ENCODE measurements at regions of chr17 and their contacts with region 1.

Region 1: GRCh38 chr17:9115446-9116191 is 94.3 kb downstream of the NTN1 start:
- DNase-seq: peak; percentile 51
- H3K4me3 Mint-ChIP-seq: peak overlapping the region; percentile 21
- H3K27ac Mint-ChIP-seq: no peak overlapping the region
- H3K4me1 Mint-ChIP-seq: no peaks in the 10 kb centered on the region
- H3K27me3 Mint-ChIP-seq: peaks cover 26% of the 10 kb centered on the region

Region 2: DNA sequence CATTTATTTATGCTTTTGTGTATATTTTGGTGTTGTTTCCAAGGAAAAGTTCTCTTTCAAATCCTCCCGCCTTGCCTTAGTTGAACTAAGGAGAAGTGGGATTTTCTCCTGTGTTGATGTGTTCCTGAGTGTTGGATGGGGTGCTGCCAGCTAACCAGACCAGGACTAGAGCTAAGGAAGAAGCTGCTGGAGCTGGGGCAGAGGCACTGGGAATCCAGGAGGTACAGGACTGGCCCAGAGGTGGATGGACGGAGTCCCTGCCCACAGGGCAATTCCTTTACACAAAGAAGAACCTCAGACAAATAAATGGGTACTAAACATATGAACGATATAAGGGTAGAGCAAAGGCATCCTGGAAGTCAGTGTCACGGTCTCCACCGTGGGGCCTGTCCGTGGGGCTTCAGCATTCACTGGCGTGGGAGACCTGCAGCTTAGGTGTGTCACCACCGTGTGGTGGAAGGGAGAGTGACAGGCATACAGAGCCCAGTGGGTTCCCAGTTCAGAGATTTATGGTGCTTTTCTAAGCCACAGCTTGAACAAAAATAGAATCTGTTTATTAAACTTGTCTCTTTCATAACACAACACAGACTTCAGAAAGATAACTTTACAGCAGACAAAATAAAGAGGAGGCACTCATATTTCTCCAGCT is 176.4 kb after region 1 on chr17:
- CTCF ChIA-PET with region 1: interaction called, 18 read pairs
- DNase-seq: peak; percentile 53
- H3K4me3 Mint-ChIP-seq: no peak overlapping the region
- H3K27ac Mint-ChIP-seq: no peak overlapping the region
- H3K4me1 Mint-ChIP-seq: peaks cover 21% of the 10 kb centered on the region
- H3K27me3 Mint-ChIP-seq: no peaks in the 10 kb centered on the region